ENCODE measurements at regions of chr11 and their contacts with region 1.

Region 1: GRCh38 chr11:1837171-1838076 is 1.4 kb upstream of the TNNI2 start:
- ATAC-seq: peak; percentile 78 to 92 (median 82)
- H3K4me3 ChIP-seq: no peak overlapping the region
- H3K27ac ChIP-seq: no peak overlapping the region
- H3K4me1 ChIP-seq: peaks cover 0 to 3% of the 10 kb centered on the region in 2 donors

Region 2: DNA sequence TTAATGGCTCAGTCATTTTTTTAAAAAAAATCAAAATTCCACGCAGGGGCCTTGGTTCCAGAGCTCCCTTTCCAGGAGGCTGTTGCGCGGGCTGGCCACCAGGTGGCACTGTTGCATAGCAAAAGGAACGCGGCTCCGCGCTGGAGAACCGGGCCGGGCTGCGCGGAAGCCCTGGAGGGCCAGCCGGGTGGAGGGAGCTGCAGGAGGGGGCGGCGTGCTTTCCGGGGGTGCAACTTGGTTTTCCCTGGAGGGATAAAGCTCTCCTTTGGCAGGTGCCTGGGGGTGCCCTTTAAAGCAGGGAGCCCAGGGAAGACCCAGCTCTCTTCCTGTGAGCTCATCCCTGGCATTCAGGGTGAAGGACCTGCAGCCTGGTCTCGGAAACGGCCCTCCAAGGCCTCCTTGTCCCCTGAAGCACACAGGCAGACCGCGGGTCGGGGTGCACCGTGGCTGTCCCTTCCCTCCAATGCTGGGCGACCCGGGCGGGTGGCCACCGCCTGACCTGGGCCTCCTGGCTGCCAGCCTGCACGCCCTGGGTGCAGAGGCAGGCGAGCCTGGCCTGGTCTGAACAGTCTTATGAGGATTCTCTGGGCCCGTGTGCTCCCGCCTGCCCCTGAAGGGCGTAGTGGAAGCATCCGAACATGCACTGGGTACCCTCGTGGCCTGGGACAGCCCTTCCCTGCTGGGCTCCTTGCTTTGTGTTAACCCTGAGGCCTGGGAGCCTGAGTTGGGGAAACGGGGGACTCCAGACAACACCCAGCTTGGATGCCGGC is 184.5 kb before region 1 on chr11:
- in situ Hi-C with region 1: loop called in 1 of 9 experiments (anchors 25 kb)
- ATAC-seq: peak; percentile 74 to 98 (median 84)
- H3K4me3 ChIP-seq: no peak overlapping the region
- H3K27ac ChIP-seq: no peak overlapping the region
- H3K4me1 ChIP-seq: peaks cover 13 to 18% of the 10 kb centered on the region in 2 donors

Region 3: GRCh38 chr11:1694064-1694845 is 143.2 kb before region 1 on chr11:
- in situ Hi-C with region 1: loop called in 2 of 9 experiments (anchors 10 kb)
- ATAC-seq: peak; percentile 86 to 96 (median 91)
- H3K4me3 ChIP-seq: peak overlapping the region in 4 of 5 donors; percentile 32 to 41 (median 34)
- H3K27ac ChIP-seq: no peak overlapping the region
- H3K4me1 ChIP-seq: peaks cover 3 to 8% of the 10 kb centered on the region in 2 donors